IMR-90 (cell line): ENCODE measurements at regions of chr5 and their contacts with region 1.

Region 1: GRCh38 chr5:122500245-122501075 is 188.4 kb downstream of the SNCAIP start:
- DNase-seq: peak; percentile 72
- ATAC-seq: peak; percentile 92
- H3K4me3 ChIP-seq: no peak overlapping the region
- H3K27ac ChIP-seq: no peak overlapping the region
- H3K4me1 ChIP-seq: peaks cover 2% of the 10 kb centered on the region; the same call in 1 of the 2 replicates
- H3K27me3 ChIP-seq: peaks cover 2% of the 10 kb centered on the region
- CTCF ChIP-seq: peak; percentile 70
- POLR2A ChIP-seq: no peak
- RAD21 ChIP-seq: peak; percentile 78

Region 2: DNA sequence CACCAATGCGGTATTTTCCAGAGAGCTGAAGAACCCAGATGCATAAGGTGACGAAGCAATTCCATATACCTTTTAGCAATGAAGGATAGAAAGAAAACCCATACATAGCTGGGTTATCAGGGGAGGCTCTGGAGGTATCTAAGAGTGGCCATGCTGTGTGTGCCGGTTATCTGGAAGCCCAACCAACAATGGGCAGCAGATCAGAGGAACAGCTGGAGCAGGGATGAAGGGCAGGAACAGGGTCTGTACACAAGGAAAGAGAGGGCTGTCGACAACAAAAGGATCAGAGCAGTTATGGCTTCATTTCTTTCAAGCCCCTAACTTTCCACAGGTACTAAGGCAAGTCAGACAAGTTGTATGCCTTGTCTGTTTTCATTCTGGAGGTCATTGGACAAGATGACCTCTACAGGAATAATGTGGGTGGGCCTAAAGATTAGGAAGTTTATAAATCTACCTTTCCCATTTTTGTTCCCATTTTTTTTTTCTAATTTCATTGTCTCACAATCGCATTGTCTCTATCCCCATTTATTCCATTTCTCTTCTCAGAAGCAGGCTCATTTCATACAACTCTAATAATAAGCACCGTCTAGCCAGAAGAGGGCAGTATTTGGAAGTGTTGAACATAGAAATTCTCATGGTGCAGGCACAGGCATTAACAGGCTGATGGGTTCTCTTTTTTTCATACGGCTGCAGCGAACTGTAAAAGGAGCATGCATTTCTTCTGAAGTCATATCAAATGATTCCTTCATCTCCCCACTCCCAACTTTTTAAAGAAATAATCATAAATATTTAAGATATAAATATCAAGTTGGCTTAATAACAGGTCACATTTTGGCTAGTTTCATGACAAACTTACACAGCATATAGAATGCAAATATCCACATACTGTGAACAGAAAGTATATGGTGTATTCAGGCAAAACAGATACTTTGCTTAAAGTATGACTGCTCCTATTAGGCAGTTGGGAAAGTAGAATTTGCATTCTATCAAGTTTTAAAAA is 307.7 kb before region 1 on chr5:
- CTCF ChIA-PET with region 1: interaction called, 3 read pairs
- POLR2A ChIA-PET with region 1: no interaction called
- dilution Hi-C with region 1: no loop called
- in situ Hi-C with region 1: no loop called
- intact Hi-C with region 1: loop called (anchors 1 kb)
- DNase-seq: peak; percentile 79
- ATAC-seq: peak; percentile 90
- H3K4me3 ChIP-seq: no peak overlapping the region
- H3K27ac ChIP-seq: no peak overlapping the region
- H3K4me1 ChIP-seq: no peaks in the 10 kb centered on the region
- H3K27me3 ChIP-seq: peaks cover under 1% of the 10 kb centered on the region; the same call in 1 of the 2 replicates
- CTCF ChIP-seq: peak; percentile 68
- POLR2A ChIP-seq: no peak
- RAD21 ChIP-seq: peak; percentile 66

Region 3: DNA sequence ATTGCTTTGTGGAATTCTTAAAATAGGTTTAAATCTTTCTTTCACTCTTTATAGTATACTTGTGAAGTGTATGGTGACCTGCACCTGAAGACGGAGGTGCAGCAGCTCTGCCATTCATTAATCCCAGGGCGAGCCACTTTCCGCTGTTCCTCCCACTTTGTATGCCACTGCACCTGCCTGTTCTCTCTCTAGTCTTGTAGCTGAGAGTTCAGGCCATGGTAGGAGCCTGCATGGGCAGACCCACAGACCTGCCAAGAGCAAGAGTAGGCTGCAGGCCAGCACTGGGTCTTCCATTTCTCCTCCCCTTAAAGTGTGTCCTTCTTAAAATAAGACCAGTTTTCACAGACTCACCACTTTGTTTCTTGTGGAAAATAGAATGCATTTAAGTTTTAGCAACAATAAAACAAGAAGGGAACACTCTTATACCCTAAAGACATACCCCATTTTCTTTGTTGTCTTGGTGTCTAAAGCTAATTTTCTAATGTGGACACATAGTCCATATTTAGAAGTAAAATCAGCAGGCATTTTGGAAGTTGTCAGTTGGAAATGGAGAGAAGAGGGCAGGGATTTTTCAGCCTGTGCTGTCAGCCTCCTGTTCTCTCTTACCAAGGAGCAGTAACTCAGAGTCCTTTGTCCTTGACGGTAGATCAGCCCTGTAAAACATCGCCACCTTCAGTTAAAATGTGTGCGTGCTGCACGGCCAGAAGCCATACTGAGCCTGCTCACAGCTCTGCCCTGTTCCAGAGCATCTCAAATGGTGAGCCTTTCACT is 85.2 kb before region 1 on chr5:
- CTCF ChIA-PET with region 1: no interaction called
- POLR2A ChIA-PET with region 1: no interaction called
- dilution Hi-C with region 1: no loop called
- in situ Hi-C with region 1: no loop called
- intact Hi-C with region 1: loop called (anchors 5 kb)
- DNase-seq: peak; percentile 80
- ATAC-seq: peak; percentile 97
- H3K4me3 ChIP-seq: no peak overlapping the region
- H3K27ac ChIP-seq: no peak overlapping the region
- H3K4me1 ChIP-seq: peaks cover 9% of the 10 kb centered on the region
- H3K27me3 ChIP-seq: no peaks in the 10 kb centered on the region
- CTCF ChIP-seq: peak; percentile 85
- POLR2A ChIP-seq: no peak
- RAD21 ChIP-seq: peak; percentile 87

Region 4: DNA sequence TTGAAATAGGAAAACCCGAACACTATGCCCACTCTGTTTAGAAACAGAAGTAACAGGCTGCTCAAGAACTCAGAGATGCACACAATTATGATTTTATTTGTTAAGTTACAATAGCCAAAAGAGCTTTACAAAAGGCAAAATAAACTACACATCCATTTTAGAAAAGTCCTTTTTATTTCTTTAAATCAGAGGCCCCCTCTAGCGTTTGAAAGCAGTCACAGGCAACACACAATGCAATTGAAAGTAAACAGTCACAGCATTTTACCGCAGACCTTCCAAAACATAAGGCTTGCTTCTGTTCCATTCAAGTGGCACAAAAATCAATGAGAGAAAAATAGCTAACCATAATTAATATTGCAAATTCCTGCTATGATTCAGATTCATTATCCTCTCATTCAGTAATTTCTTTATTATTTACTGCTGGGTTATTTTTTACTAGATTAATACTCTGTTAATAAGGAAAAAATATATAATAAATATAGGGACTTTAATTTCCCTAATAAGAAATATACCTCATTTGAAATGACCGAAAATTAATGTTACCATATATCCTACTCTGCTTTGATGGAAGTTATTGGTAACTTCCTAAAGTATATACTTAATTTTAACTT is 844.5 kb after region 1 on chr5:
- CTCF ChIA-PET with region 1: interaction called, 3 read pairs
- POLR2A ChIA-PET with region 1: no interaction called
- dilution Hi-C with region 1: no loop called
- in situ Hi-C with region 1: loop called (anchors 10 kb)
- intact Hi-C with region 1: no loop called
- DNase-seq: peak; percentile 52
- ATAC-seq: peak; percentile 79
- H3K4me3 ChIP-seq: no peak overlapping the region
- H3K27ac ChIP-seq: no peak overlapping the region
- H3K4me1 ChIP-seq: no peaks in the 10 kb centered on the region
- H3K27me3 ChIP-seq: no peaks in the 10 kb centered on the region
- CTCF ChIP-seq: peak; percentile 83
- POLR2A ChIP-seq: no peak
- RAD21 ChIP-seq: peak; percentile 71

Region 5: GRCh38 chr5:123610665-123611405 is 1110.4 kb after region 1 on chr5:
- CTCF ChIA-PET with region 1: no interaction called
- POLR2A ChIA-PET with region 1: no interaction called
- dilution Hi-C with region 1: no loop called
- in situ Hi-C with region 1: loop called (anchors 25 kb)
- intact Hi-C with region 1: loop called (anchors 2 kb)
- DNase-seq: peak; percentile 80
- ATAC-seq: peak; percentile 81
- H3K4me3 ChIP-seq: no peak overlapping the region
- H3K27ac ChIP-seq: no peak overlapping the region
- H3K4me1 ChIP-seq: no peaks in the 10 kb centered on the region
- H3K27me3 ChIP-seq: no peaks in the 10 kb centered on the region
- CTCF ChIP-seq: peak; percentile 98
- POLR2A ChIP-seq: no peak
- RAD21 ChIP-seq: peak; percentile 93